B cell (primary cell): ENCODE measurements at regions of chr21 and their contacts with region 1.

Region 1: GRCh38 chr21:14616303-14617039 is 70.4 kb upstream of the SAMSN1 start:
- DNase-seq: no peak
- ATAC-seq: no peak
- H3K4me3 ChIP-seq: no peak overlapping the region
- H3K4me3 Mint-ChIP-seq: no peak overlapping the region
- H3K27ac ChIP-seq: no peak overlapping the region
- H3K27ac Mint-ChIP-seq: no peak overlapping the region
- H3K4me1 ChIP-seq: peaks cover 7 to 11% of the 10 kb centered on the region in 2 donors
- H3K4me1 Mint-ChIP-seq: peaks cover 28% of the 10 kb centered on the region
- H3K27me3 ChIP-seq: no peaks in the 10 kb centered on the region
- H3K27me3 Mint-ChIP-seq: no peaks in the 10 kb centered on the region
- CTCF ChIP-seq: no peak

Region 2: GRCh38 chr21:14567331-14568279 is 48.9 kb before region 1 on chr21:
- CTCF ChIA-PET with region 1: no interaction called
- POLR2A ChIA-PET with region 1: no interaction called
- intact Hi-C with region 1: loop called (anchors 5 kb)
- DNase-seq: peak; percentile 25
- ATAC-seq: peak; percentile 24
- H3K4me3 ChIP-seq: no peak overlapping the region
- H3K4me3 Mint-ChIP-seq: peak overlapping the region; percentile 35
- H3K27ac ChIP-seq: no peak overlapping the region
- H3K27ac Mint-ChIP-seq: no peak overlapping the region
- H3K4me1 ChIP-seq: peaks cover 19 to 20% of the 10 kb centered on the region in 2 donors
- H3K4me1 Mint-ChIP-seq: peaks cover 29% of the 10 kb centered on the region
- H3K27me3 ChIP-seq: no peaks in the 10 kb centered on the region
- H3K27me3 Mint-ChIP-seq: no peaks in the 10 kb centered on the region
- CTCF ChIP-seq: no peak

Region 3: DNA sequence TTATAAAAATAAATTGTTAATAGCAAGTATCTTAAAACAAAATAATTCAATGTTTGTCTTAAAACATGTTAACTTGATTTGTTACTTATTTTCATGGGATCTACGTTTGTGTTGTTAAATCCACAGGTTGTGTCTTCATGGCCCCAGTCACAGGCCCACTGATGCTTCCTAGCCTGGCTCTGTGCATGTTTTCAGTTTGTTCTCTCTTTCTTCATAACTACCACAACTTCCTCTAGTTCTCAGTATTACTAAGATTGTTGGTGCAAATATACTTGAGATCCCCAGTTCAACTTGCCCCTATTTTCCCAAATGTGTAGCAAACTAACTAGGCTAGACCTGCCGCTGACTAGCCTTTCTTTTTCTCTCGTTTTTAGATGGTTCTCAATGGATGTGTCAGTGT is 197.8 kb after region 1 on chr21:
- CTCF ChIA-PET with region 1: no interaction called
- POLR2A ChIA-PET with region 1: no interaction called
- intact Hi-C with region 1: no loop called
- DNase-seq: no peak
- ATAC-seq: no peak
- H3K4me3 ChIP-seq: no peak overlapping the region
- H3K4me3 Mint-ChIP-seq: no peak overlapping the region
- H3K27ac ChIP-seq: no peak overlapping the region
- H3K27ac Mint-ChIP-seq: no peak overlapping the region
- H3K4me1 ChIP-seq: peaks cover 10 to 14% of the 10 kb centered on the region in 2 donors
- H3K4me1 Mint-ChIP-seq: peaks cover 28% of the 10 kb centered on the region
- H3K27me3 ChIP-seq: no peaks in the 10 kb centered on the region
- H3K27me3 Mint-ChIP-seq: no peaks in the 10 kb centered on the region
- CTCF ChIP-seq: no peak

Region 4: DNA sequence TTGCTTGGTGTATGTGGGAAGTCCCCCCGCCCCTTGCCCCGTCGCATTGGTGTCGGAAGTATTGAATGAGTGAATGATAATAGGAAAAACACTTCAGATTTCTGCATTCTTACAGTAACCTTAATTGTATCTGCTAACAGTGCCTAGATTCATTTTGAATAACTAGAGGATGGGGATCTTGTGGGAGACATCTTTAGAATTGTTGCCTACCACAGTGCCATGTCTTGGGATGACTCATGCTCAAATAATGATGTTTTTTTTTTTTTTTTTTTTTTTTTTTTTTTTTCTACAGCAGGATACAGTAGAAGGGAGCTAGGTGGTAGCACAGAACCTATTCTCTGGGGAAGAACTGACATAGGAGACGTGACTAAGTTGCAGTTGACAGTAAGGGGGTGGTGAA is 1351.2 kb after region 1 on chr21:
- CTCF ChIA-PET with region 1: no interaction called
- POLR2A ChIA-PET with region 1: no interaction called
- intact Hi-C with region 1: no loop called
- DNase-seq: no peak
- ATAC-seq: no peak
- H3K4me3 ChIP-seq: no peak overlapping the region
- H3K4me3 Mint-ChIP-seq: no peak overlapping the region
- H3K27ac ChIP-seq: no peak overlapping the region
- H3K27ac Mint-ChIP-seq: no peak overlapping the region
- H3K4me1 ChIP-seq: no peaks in the 10 kb centered on the region
- H3K4me1 Mint-ChIP-seq: no peaks in the 10 kb centered on the region
- H3K27me3 ChIP-seq: no peaks in the 10 kb centered on the region
- H3K27me3 Mint-ChIP-seq: no peaks in the 10 kb centered on the region
- CTCF ChIP-seq: no peak